ENCODE measurements at regions of chr1 and their contacts with region 1.

Region 1: DNA sequence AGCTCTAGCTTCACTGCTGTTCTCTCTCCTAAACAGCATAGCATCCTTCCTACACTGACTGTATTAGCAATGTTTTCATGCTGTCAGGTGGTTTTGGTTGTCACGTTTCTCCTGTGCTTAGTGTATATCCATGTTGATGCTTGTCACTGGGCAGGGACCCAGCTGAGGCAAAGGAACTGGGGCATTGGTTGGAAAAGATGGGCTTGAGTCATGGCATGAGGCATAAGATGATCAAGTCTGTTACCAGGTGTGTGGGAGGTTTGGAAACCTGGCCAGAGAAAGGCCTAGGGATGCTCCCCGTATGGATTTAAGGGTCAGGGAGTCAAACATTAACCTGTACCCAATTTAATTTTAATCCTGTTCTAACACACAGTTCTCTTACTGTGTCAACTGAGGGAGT is 69.6 kb downstream of the OSBPL9 start:
- DNase-seq: no peak
- H3K4me3 Mint-ChIP-seq: no peak overlapping the region
- H3K27ac Mint-ChIP-seq: no peak overlapping the region
- H3K4me1 Mint-ChIP-seq: peaks cover 6% of the 10 kb centered on the region
- H3K27me3 Mint-ChIP-seq: no peaks in the 10 kb centered on the region

Region 2: DNA sequence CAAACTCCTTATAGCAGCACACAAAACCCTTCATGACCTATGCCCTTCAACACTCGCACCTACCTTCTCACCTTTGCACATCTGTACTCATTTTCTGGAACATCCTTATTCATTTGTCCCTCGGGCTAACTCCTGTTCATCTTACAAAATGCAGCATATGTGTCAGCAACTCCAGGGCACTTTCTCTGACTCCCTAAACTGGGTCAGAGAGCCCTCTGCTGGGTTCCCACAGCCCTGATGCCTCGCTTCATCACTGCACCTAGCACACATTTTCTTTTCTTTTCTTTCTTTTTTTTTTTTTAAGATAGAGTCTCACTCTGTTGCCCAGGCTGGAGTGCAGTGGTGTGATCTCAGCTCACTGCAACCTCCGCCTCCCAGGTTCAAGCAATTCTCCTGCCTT is 250.1 kb after region 1 on chr1:
- intact Hi-C with region 1: loop called (anchors 10 kb)
- DNase-seq: no peak
- H3K4me3 Mint-ChIP-seq: no peak overlapping the region
- H3K27ac Mint-ChIP-seq: no peak overlapping the region
- H3K4me1 Mint-ChIP-seq: no peaks in the 10 kb centered on the region
- H3K27me3 Mint-ChIP-seq: peaks cover 3% of the 10 kb centered on the region

Region 3: DNA sequence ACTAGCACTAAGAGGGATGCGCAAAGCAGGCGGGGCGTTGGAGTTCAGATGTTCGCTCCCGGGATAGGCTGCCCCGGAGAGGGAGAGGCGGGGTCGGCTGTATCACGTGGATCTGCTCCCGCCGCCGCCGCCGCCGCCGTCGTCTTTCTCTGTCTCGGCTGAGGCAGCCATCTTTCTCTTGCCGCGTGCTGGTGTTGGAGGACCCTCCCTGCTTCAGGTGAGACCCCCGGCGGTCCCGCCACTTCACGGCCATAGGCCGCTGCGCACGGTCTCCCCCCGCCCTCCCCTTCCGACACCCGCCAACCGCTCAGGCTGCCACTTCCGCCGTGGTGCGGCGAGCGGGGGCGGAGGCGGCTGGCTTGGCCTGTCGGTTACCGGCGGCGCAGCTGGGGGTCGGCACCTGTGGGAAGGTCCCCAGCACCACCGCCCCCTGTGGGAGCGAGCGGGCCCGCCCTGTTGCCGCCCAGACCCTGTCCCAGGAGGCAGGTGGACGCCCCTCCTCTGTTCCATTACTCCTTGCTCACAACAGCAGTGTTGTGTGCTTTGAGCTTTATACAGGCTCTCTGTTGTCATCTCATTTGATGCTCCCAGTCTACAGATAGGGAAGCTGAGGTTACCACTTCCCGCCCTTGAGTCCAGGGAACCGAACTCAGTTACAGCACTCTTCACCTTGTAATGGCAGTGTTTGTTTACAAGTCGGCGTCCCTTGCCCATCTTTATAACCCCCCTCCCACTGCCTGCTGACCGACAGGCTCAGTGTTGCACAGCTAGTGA is 369.9 kb after region 1 on chr1 and contains the start of gene BTF3L4:
- intact Hi-C with region 1: no loop called
- DNase-seq: peak; percentile 92
- H3K4me3 Mint-ChIP-seq: peak within 1 kb of the TSS; percentile 100
- H3K27ac Mint-ChIP-seq: peak within 1 kb of the TSS; percentile 100
- H3K4me1 Mint-ChIP-seq: peaks cover 72% of the 10 kb centered on the region
- H3K27me3 Mint-ChIP-seq: no peaks in the 10 kb centered on the region
- total RNA-seq, gene BTF3L4: 44.9 and 47.5 TPM in 2 replicates